Natural killer cell (primary cell): ENCODE measurements at regions of chr17 and their contacts with region 1.

Region 1: GRCh38 chr17:77881545-77881944 is 77.0 kb upstream of the TNRC6C start:
- DNase-seq: peak; percentile 85 to 89
- ATAC-seq: peak; percentile 59 to 82 (median 79)
- H3K4me3 ChIP-seq: peak overlapping the region; percentile 29
- H3K4me3 Mint-ChIP-seq: peak overlapping the region; percentile 87
- H3K27ac ChIP-seq: peak overlapping the region; percentile 90
- H3K27ac Mint-ChIP-seq: peak overlapping the region; percentile 94 to 97
- H3K4me1 ChIP-seq: peaks cover 73% of the 10 kb centered on the region
- H3K4me1 Mint-ChIP-seq: peaks cover 72 to 80% of the 10 kb centered on the region in 2 donors
- H3K27me3 ChIP-seq: no peaks in the 10 kb centered on the region
- H3K27me3 Mint-ChIP-seq: no peaks in the 10 kb centered on the region
- CTCF ChIP-seq: no peak

Region 2: GRCh38 chr17:77325577-77326075 is 555.9 kb before region 1 on chr17:
- intact Hi-C with region 1: loop called (anchors 5 kb)
- DNase-seq: peak in 1 of 2 donors; percentile 50
- ATAC-seq: peak; percentile 19 to 46 (median 42)
- H3K4me3 ChIP-seq: no peak overlapping the region
- H3K4me3 Mint-ChIP-seq: peak overlapping the region; percentile 72
- H3K27ac ChIP-seq: peak overlapping the region; percentile 70
- H3K27ac Mint-ChIP-seq: peak overlapping the region; percentile 82 to 95
- H3K4me1 ChIP-seq: peaks cover 84% of the 10 kb centered on the region
- H3K4me1 Mint-ChIP-seq: peaks cover 33 to 40% of the 10 kb centered on the region in 2 donors
- H3K27me3 ChIP-seq: no peaks in the 10 kb centered on the region
- H3K27me3 Mint-ChIP-seq: no peaks in the 10 kb centered on the region
- CTCF ChIP-seq: no peak

Region 3: DNA sequence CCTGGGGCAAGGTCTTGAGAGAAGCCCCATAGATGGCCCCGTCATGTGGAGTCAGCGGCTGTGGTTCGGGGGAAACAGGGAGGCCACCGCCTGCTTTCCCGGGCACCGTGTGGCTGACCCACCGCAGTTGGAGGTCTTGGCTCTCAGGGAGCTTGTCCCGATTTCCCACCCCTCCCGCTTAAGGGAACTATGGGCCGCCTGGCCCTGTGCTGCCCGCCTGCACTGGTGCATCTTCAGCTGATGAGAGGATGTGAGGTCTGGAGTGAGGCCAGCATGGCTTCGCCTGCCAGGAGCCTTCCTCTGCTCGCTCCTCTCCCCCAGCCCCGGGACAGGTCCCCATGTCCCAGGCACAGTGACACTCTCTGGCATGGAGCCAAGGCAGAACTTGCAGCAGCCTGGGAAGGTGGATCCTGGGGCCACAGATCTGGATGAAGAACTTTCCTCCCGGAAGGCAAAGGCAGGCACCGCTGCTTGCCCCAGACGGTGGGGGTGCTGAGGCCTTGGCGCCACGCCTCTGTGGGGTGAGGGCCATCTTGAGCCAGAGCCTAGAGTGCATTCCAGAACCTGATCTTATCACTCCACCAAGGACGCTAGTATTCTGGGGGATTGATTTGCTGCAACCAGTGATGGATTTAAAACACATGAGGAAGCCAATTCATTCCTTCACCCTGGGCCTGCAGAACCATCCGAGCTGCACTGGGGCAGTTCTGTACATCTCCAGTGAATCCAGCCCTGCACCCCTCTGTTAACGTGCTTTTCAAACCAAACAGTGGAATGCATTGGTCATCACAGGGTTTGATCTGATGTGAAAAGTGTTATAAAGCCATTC is 101.6 kb before region 1 on chr17:
- intact Hi-C with region 1: loop called (anchors 2 kb)
- DNase-seq: no peak
- ATAC-seq: no peak
- H3K4me3 ChIP-seq: no peak overlapping the region
- H3K4me3 Mint-ChIP-seq: no peak overlapping the region
- H3K27ac ChIP-seq: no peak overlapping the region
- H3K27ac Mint-ChIP-seq: no peak overlapping the region
- H3K4me1 ChIP-seq: peaks cover 29% of the 10 kb centered on the region
- H3K4me1 Mint-ChIP-seq: peaks cover 18 to 20% of the 10 kb centered on the region in 2 donors
- H3K27me3 ChIP-seq: no peaks in the 10 kb centered on the region
- H3K27me3 Mint-ChIP-seq: no peaks in the 10 kb centered on the region
- CTCF ChIP-seq: no peak

Region 4: GRCh38 chr17:77829843-77830799 is 51.4 kb before region 1 on chr17:
- intact Hi-C with region 1: no loop called
- DNase-seq: no peak
- ATAC-seq: no peak
- H3K4me3 ChIP-seq: no peak overlapping the region
- H3K4me3 Mint-ChIP-seq: no peak overlapping the region
- H3K27ac ChIP-seq: no peak overlapping the region
- H3K27ac Mint-ChIP-seq: no peak overlapping the region
- H3K4me1 ChIP-seq: peaks cover 25% of the 10 kb centered on the region
- H3K4me1 Mint-ChIP-seq: peaks cover 11 to 21% of the 10 kb centered on the region in 2 donors
- H3K27me3 ChIP-seq: no peaks in the 10 kb centered on the region
- H3K27me3 Mint-ChIP-seq: peaks cover 12 to 14% of the 10 kb centered on the region in 2 donors
- CTCF ChIP-seq: no peak

Region 5: GRCh38 chr17:77842528-77843147 is 38.9 kb before region 1 on chr17:
- intact Hi-C with region 1: loop called (anchors 1 kb)
- DNase-seq: no peak
- ATAC-seq: no peak
- H3K4me3 ChIP-seq: no peak overlapping the region
- H3K4me3 Mint-ChIP-seq: no peak overlapping the region
- H3K27ac ChIP-seq: no peak overlapping the region
- H3K27ac Mint-ChIP-seq: peak overlapping the region; percentile 84 to 96
- H3K4me1 ChIP-seq: peaks cover 70% of the 10 kb centered on the region
- H3K4me1 Mint-ChIP-seq: peaks cover 69 to 73% of the 10 kb centered on the region in 2 donors
- H3K27me3 ChIP-seq: no peaks in the 10 kb centered on the region
- H3K27me3 Mint-ChIP-seq: peaks cover 0 to 8% of the 10 kb centered on the region in 2 donors
- CTCF ChIP-seq: no peak

Region 6: GRCh38 chr17:77957857-77958715 is 76.5 kb after region 1 on chr17 and contains the start of gene TNRC6C:
- intact Hi-C with region 1: loop called (anchors 1 kb)
- DNase-seq: peak; percentile 99
- ATAC-seq: peak; percentile 88 to 97 (median 92)
- H3K4me3 ChIP-seq: peak within 1 kb of the TSS; percentile 83
- H3K4me3 Mint-ChIP-seq: peak within 1 kb of the TSS; percentile 95
- H3K27ac ChIP-seq: peak within 1 kb of the TSS; percentile 72
- H3K27ac Mint-ChIP-seq: peak within 1 kb of the TSS; percentile 88 to 93
- H3K4me1 ChIP-seq: peaks cover 21% of the 10 kb centered on the region
- H3K4me1 Mint-ChIP-seq: peaks cover 43 to 45% of the 10 kb centered on the region in 2 donors
- H3K27me3 ChIP-seq: no peaks in the 10 kb centered on the region
- H3K27me3 Mint-ChIP-seq: peaks cover 5 to 11% of the 10 kb centered on the region in 2 donors
- CTCF ChIP-seq: no peak
- total RNA-seq, gene TNRC6C: 74.3 to 100 (median 76.3) TPM